BJ (cell line): ENCODE measurements at regions of chr13 and their contacts with region 1.

Region 1: DNA sequence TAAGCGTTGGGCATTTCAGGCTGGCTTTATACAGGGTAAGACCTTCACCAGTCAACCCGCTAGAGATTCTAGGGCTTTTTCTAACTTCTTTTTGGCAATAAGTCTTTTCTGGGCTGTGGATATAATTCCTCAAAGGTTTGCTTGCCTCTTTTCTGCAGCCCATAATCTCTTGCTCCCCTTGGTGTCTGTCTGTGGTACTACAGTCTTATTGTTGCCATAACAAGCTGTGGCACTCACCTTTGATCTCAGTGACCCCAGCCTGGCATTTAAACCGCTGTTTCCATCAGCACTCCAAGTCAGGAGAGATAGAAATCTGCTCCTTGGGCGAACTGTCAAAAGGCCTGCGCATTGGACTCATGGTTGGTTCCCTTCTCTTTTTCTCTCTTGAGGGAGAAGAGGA is 14.5 kb upstream of the MPHOSPH8 start:
- DNase-seq: no peak
- H3K4me3 ChIP-seq: no peak overlapping the region
- H3K27me3 ChIP-seq: no peaks in the 10 kb centered on the region
- CTCF ChIP-seq: peak; percentile 75

Region 2: GRCh38 chr13:19606152-19606551 is 12.8 kb before region 1 on chr13:
- CTCF ChIA-PET with region 1: interaction called, 12 read pairs
- POLR2A ChIA-PET with region 1: no interaction called
- DNase-seq: no peak
- H3K4me3 ChIP-seq: no peak overlapping the region
- H3K27me3 ChIP-seq: no peaks in the 10 kb centered on the region
- CTCF ChIP-seq: no peak

Region 3: GRCh38 chr13:19852766-19853165 is 233.8 kb after region 1 on chr13:
- CTCF ChIA-PET with region 1: no interaction called
- POLR2A ChIA-PET with region 1: no interaction called
- DNase-seq: no peak
- H3K4me3 ChIP-seq: no peak overlapping the region
- H3K27me3 ChIP-seq: no peaks in the 10 kb centered on the region
- CTCF ChIP-seq: no peak